Activated B cell treated with CpG ODN at 0.5 μM for 24 hours (primary cell): ENCODE measurements at regions of chr1 and their contacts with region 1.

Region 1: DNA sequence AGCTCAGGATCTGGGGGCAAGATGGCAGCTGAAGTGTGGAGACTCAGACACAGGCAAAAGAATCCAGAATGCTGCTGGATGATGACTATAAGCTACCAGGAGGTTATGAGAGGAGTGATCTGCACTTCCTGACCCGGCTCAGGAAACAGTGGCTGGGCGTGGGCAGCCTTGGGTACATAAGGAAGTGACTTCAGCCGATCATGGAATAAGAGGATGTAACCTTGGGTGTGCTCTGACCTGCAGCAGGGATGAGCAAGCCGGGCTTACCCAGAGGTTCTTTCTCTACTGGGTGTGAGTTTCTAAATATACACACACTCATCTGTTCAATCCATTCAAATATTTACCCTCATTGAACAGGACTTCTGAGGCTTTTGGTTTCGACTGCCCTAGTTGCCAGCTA is 62.7 kb downstream of the CD34 start:
- DNase-seq: no peak
- ATAC-seq: peak; percentile 52
- H3K4me3 Mint-ChIP-seq: no peak overlapping the region
- H3K27ac Mint-ChIP-seq: no peak overlapping the region
- H3K4me1 Mint-ChIP-seq: peaks cover 53% of the 10 kb centered on the region
- H3K27me3 Mint-ChIP-seq: no peaks in the 10 kb centered on the region
- CTCF ChIP-seq: no peak

Region 2: GRCh38 chr1:207748737-207749528 is 99.3 kb before region 1 on chr1:
- CTCF ChIA-PET with region 1: no interaction called
- POLR2A ChIA-PET with region 1: no interaction called
- intact Hi-C with region 1: no loop called
- DNase-seq: no peak
- ATAC-seq: no peak
- H3K4me3 Mint-ChIP-seq: no peak overlapping the region
- H3K27ac Mint-ChIP-seq: no peak overlapping the region
- H3K4me1 Mint-ChIP-seq: peaks cover 37% of the 10 kb centered on the region
- H3K27me3 Mint-ChIP-seq: no peaks in the 10 kb centered on the region
- CTCF ChIP-seq: no peak

Region 3: GRCh38 chr1:207863893-207864535 is 15.8 kb after region 1 on chr1:
- CTCF ChIA-PET with region 1: interaction called, 4 read pairs
- POLR2A ChIA-PET with region 1: interaction called, 3 read pairs
- intact Hi-C with region 1: loop called (anchors 2 kb)
- DNase-seq: no peak
- ATAC-seq: peak; percentile 67
- H3K4me3 Mint-ChIP-seq: peak overlapping the region; percentile 19
- H3K27ac Mint-ChIP-seq: peak overlapping the region; percentile 37
- H3K4me1 Mint-ChIP-seq: peaks cover 66% of the 10 kb centered on the region
- H3K27me3 Mint-ChIP-seq: no peaks in the 10 kb centered on the region
- CTCF ChIP-seq: no peak